A549 (cell line): ENCODE measurements at regions of chr14 and their contacts with region 1.

Region 1: DNA sequence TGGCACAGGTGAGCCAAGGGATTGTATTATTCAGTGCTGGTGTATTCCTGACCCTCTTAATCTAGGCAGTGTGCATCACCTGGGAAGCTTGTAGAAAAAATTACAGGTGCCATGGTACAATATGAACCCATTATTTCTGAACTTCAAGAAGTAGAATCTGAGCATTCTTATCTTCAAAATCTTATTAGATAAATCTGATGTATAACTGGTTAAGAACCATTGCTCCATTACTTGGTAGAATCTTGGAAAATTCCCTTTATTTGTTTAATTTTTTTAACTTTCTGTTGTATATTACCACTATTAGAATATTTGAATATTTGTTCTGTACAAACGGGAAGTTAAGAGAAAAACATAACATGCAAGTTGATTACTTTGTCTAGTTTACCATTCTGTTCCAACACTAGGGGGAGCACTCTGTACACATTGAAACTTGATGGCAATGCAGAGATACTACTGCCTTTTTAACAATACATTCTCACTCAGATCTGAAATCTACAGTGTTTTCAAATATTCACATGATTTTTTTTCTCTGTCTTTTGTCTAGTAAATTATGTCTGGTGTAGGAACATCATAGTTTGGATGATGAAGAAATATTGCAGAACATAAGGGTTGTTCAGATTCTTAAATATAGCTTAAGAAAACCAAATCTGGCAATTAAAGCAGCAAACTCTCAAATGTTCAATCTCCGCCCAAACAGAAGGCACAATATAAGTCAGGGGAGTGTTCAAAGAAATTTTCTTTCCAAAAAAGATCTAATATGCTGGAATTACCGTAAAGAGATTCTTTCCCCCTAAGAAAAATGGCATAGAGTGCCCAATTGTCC is 196.6 kb downstream of the PCNX1 start:
- DNase-seq: peak; percentile 48 to 62
- ATAC-seq: peak; percentile 76 to 82; a peak in 4 of 6 replicates
- H3K4me3 ChIP-seq: no peak overlapping the region
- H3K27ac ChIP-seq: no peak overlapping the region
- H3K4me1 ChIP-seq: 0 out of 3 replicates have a peak, but pooled peaks cover 2% of the 10 kb centered on the region
- CTCF ChIP-seq: peak; percentile 87
- EP300 ChIP-seq: no peak
- POLR2A ChIP-seq: no peak
- RAD21 ChIP-seq: peak; percentile 49 to 55; a peak in 4 of 5 replicates

Region 2: DNA sequence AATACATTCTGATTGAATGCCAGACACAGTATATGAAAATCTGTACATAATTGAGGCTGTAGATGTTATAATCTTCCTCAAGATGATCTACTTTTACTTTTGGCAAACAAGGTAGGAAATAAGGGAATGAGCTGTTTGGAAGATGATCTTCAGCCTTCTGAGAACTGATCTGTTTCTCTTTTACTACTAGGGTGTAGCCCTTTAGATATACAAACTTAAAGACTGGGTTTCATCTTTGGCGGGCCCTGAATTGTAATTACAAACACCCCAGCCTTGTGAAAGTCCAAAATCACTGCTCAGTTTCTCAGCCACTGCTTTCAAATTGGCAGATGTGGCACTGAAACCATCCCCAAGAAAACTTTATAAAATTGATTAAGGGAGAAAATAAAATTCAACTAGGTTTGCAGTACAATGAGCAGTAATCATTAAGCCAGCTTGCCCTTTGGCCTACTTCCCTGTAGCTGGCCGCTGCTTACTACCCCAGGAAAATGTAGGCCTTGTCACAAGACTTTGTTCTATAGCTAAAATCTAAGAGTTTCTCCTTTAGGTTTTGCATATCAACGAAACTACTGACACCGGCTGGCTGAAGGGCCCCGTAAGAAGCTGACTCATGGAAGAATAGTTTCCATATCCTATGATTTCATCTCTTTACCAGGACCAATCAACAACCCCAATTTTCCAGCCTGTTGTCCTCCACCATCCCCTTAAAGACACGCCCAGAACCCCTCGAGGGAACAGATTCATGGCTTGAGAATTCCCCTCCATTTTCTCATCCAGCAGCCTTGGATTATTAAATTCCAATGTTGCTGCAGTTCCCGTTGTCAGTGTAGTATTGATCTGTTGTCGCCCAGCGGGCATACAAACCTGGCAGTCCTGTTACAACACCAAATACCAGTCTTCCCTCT is 14.2 kb after region 1 on chr14:
- CTCF ChIA-PET with region 1: interaction called, 52 read pairs
- POLR2A ChIA-PET with region 1: no interaction called
- DNase-seq: peak in 1 of 2 experiments; percentile 11
- ATAC-seq: no peak; a peak in 1 of 6 replicates
- H3K4me3 ChIP-seq: no peak overlapping the region
- H3K27ac ChIP-seq: no peak overlapping the region
- H3K4me1 ChIP-seq: peaks cover 10% of the 10 kb centered on the region; the same call in 1 of the 3 replicates
- CTCF ChIP-seq: no peak
- EP300 ChIP-seq: no peak
- POLR2A ChIP-seq: no peak
- RAD21 ChIP-seq: no peak

Region 3: DNA sequence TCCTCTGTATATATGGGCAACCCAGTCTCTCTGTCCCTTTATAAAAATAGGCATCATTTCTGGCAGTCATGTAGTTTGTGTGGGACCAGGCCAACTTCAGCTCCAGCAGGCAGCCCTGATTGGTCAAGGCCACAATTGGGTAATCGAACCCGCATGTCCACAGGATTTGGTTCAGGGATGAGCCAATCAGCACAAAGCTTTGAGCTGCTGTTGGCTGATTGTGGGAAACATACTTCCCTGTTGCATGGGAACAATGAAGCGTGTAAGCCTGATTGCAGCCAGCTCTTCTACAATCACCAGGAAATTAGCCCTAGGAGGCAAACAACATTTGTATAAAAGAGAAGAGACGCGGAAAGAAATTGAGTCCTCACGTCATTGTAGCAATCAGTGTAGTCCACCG is 132.0 kb after region 1 on chr14:
- CTCF ChIA-PET with region 1: no interaction called
- POLR2A ChIA-PET with region 1: no interaction called
- DNase-seq: no peak
- ATAC-seq: no peak
- H3K4me3 ChIP-seq: no peak overlapping the region
- H3K27ac ChIP-seq: no peak overlapping the region
- H3K4me1 ChIP-seq: no peaks in the 10 kb centered on the region
- CTCF ChIP-seq: no peak
- EP300 ChIP-seq: no peak
- POLR2A ChIP-seq: no peak
- RAD21 ChIP-seq: no peak